Heart right ventricle (tissue), 16 donors: ENCODE measurements at regions of chr4 and their contacts with region 1.

Region 1: GRCh38 chr4:5142726-5143125 is 91.4 kb downstream of the STK32B start:
- DNase-seq: peak in 1 of 2 donors; percentile 28
- ATAC-seq: no peak
- H3K4me3 ChIP-seq: no peak overlapping the region
- H3K27ac ChIP-seq: no peak overlapping the region
- H3K4me1 ChIP-seq: no peaks in the 10 kb centered on the region
- H3K27me3 ChIP-seq: peaks cover 0 to under 1% (median 0%) of the 10 kb centered on the region in 7 donors
- CTCF ChIP-seq: peak in 8 of 9 donors; percentile 9 to 57 (median 48)

Region 2: GRCh38 chr4:4820261-4820660 is 322.5 kb before region 1 on chr4:
- intact Hi-C with region 1: no loop called
- DNase-seq: no peak
- ATAC-seq: no peak
- H3K4me3 ChIP-seq: no peak overlapping the region
- H3K27ac ChIP-seq: no peak overlapping the region
- H3K4me1 ChIP-seq: no peaks in the 10 kb centered on the region
- H3K27me3 ChIP-seq: peaks cover 0 to 17% (median 11%) of the 10 kb centered on the region in 7 donors
- CTCF ChIP-seq: no peak

Region 3: DNA sequence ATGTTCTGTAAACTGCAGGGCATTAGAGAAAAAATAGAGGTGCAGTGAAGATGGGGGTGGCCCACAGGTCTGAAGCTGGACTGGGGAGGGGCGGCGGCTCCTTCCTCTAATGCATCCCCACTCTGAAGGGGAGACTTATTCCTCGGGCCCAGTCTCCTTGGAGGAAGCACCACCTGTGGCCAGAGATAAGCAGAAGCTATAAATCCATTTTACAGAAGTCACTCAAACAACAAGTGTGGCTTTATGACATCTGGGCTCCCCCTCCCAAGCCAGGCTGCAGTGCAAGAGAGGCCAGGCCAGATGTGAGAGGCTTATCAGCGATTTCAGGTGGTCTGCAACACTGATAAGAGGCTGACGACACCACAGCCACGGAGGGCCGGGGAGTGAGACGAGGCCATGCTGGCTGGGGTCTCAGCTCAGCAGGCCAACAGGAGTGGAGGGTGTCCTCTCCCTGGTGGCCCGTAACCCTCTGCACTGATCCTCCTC is 139.3 kb before region 1 on chr4:
- intact Hi-C with region 1: loop called in 5 of 10 experiments (anchors 5 to 10 kb)
- DNase-seq: no peak
- ATAC-seq: no peak
- H3K4me3 ChIP-seq: no peak overlapping the region
- H3K27ac ChIP-seq: no peak overlapping the region
- H3K4me1 ChIP-seq: no peaks in the 10 kb centered on the region
- H3K27me3 ChIP-seq: peaks cover 9 to 71% (median 44%) of the 10 kb centered on the region in 7 donors
- CTCF ChIP-seq: no peak